ENCODE measurements at regions of chr13 and their contacts with region 1.

Region 1: DNA sequence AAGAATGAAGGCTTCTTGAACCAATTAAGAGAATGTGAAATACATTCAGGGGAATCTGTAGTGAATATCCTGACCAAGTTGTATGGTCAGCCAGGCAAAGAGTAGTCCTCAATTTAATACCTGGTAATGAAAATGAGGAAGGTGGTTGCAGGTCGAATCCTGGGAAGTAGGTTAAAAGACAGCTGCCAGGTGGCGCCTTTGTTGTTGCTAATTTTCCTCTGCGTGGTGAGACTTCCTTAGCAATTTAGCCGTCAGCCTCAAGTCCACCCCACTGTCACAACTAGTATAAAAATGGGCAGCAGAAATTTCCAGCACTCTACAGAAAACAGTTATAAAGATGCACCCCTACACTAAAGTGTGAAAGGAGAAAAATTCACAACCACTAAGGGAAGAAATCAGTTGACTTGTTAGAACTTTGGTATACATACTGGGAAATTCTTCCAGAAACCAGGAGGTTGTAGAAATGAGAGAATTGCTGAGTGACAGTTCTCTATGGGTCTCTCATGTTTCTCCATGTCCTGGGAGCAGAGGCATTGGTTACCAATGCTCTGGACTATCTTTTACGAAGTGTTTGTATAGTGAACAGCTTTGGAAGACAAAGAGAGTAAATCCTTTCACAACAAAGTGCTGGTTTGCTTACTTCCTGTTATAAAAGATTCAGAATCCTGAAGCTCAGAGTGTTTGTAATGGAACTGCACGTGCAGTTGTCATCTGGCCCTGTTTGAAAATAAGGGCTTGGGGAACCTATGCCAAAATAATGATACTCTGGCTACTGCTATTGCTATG is 235.9 kb downstream of the NHLRC3 start:
- DNase-seq: no peak
- H3K4me3 ChIP-seq: no peak overlapping the region
- H3K27ac ChIP-seq: no peak overlapping the region
- H3K4me1 ChIP-seq: no peaks in the 10 kb centered on the region
- H3K27me3 ChIP-seq: peaks cover 3% of the 10 kb centered on the region
- CTCF ChIP-seq: peak; percentile 15 to 56

Region 2: GRCh38 chr13:39415008-39415802 is 141.1 kb after region 1 on chr13:
- CTCF ChIA-PET with region 1: no interaction called
- dilution Hi-C with region 1: no loop called
- in situ Hi-C with region 1: no loop called
- intact Hi-C with region 1: loop called (anchors 1 kb)
- DNase-seq: peak; percentile 22
- H3K4me3 ChIP-seq: no peak overlapping the region
- H3K27ac ChIP-seq: no peak overlapping the region
- H3K4me1 ChIP-seq: peaks cover 7% of the 10 kb centered on the region
- H3K27me3 ChIP-seq: no peaks in the 10 kb centered on the region
- CTCF ChIP-seq: peak; percentile 53 to 73

Region 3: GRCh38 chr13:39676315-39676876 is 402.2 kb after region 1 on chr13:
- CTCF ChIA-PET with region 1: no interaction called
- dilution Hi-C with region 1: no loop called
- in situ Hi-C with region 1: no loop called
- intact Hi-C with region 1: loop called (anchors 1 kb)
- DNase-seq: peak; percentile 21
- H3K4me3 ChIP-seq: no peak overlapping the region
- H3K27ac ChIP-seq: no peak overlapping the region
- H3K4me1 ChIP-seq: no peaks in the 10 kb centered on the region
- H3K27me3 ChIP-seq: no peaks in the 10 kb centered on the region
- CTCF ChIP-seq: peak; percentile 35 to 42